ENCODE measurements at regions of chr7 and their contacts with region 1.

Region 1: DNA sequence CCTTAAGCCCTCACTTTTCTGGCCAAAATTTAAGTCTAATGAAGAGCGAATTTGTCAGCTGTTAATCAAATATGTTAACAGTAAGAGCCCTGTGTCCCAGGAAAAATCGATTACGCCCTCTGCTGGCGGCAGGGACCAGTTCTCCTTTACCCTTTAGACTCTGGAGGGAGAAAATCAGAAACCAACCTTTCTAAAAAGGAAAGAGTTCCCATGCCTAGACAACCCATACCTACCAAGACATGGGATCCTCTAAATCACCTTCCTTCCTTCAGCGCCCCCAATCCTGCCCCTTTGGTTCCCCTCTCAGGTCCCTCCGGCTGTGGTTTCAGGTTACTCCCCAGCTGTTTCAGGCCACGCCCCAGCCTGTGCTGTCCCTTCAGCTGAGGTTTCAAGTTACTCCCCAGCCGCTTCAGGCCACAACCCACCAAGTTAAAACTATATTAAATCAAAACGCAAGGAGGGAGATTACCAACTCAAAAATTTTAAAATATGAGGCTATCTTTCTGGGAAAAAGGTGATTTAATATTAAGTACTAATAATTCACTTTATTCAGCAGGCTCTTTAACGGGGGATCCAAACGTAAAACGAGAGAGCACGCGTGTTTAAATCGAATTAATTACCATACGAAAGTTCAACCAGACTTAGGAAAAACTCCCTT is 1.4 kb upstream of the AKR1B15 start:
- DNase-seq: peak; percentile 88

Region 2: GRCh38 chr7:134535272-134535918 is 12.1 kb before region 1 on chr7:
- CTCF ChIA-PET with region 1: interaction called, 13 read pairs
- POLR2A ChIA-PET with region 1: no interaction called
- DNase-seq: no peak